ENCODE measurements at regions of chr17 and their contacts with region 1.

Region 1: DNA sequence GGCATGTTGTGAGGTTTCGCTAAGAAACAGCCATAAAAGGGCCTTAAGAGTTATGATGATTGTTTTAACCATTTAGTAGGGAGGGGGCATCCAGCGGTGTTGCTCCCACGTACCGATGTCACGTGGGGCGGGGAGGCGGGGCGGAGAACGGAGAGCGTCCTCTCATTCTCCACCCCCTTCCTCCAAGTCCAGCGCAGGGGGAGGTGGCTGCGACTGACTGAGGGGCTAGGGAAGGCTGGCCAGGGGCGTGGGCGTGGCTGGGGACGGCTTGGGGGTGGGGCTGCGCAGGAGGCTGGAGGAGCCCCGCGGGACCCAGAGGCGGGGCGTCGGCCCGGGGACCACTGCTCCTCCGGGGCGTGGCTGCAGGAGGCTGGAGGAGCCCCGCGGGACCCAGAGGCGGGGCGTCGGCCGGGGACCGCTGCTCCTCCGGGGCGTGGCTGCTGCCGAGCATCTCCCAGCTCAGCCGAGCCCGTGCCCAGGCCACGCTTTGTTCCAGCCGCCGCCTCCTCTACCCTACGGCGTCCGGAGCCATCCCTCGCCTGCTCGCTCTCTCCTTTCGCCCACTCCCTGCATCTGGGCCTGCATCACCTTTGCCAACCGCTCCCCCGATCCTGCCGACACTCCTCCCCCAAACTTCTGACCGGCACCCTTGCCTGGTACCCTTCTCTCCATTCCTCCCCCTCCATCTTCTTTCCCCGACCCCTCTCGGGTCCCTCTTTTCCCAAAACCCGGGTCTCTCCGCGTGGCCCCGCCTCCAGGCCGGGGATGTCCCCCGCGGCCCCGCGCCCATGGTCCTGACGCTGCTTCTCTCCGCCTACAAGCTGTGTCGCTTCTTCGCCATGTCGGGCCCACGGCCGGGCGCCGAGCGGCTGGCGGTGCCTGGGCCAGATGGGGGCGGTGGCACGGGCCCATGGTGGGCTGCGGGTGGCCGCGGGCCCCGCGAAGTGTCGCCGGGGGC is at the start of gene SARM1:
- DNase-seq: peak; percentile 88
- ATAC-seq: peak; percentile 92
- H3K4me3 Mint-ChIP-seq: peak within 1 kb of the TSS; percentile 94
- H3K27ac Mint-ChIP-seq: peak within 1 kb of the TSS; percentile 88
- H3K4me1 Mint-ChIP-seq: peaks cover 18% of the 10 kb centered on the region
- H3K27me3 Mint-ChIP-seq: no peaks in the 10 kb centered on the region
- total RNA-seq, gene SARM1: 25.6 to 25.8 TPM

Region 2: GRCh38 chr17:28384281-28385036 is 12.9 kb after region 1 on chr17:
- POLR2A ChIA-PET with region 1: interaction called, 19 read pairs
- DNase-seq: peak; percentile 76
- ATAC-seq: peak; percentile 95
- H3K4me3 Mint-ChIP-seq: peak overlapping the region; percentile 96
- H3K27ac Mint-ChIP-seq: peak overlapping the region; percentile 92
- H3K4me1 Mint-ChIP-seq: peaks cover 23% of the 10 kb centered on the region
- H3K27me3 Mint-ChIP-seq: no peaks in the 10 kb centered on the region